Activated CD4-positive, alpha-beta memory T cell treated with anti-CD3 and anti-CD28 coated beads for 36 hours (primary cell): ENCODE measurements at regions of chr7 and their contacts with region 1.

Region 1: DNA sequence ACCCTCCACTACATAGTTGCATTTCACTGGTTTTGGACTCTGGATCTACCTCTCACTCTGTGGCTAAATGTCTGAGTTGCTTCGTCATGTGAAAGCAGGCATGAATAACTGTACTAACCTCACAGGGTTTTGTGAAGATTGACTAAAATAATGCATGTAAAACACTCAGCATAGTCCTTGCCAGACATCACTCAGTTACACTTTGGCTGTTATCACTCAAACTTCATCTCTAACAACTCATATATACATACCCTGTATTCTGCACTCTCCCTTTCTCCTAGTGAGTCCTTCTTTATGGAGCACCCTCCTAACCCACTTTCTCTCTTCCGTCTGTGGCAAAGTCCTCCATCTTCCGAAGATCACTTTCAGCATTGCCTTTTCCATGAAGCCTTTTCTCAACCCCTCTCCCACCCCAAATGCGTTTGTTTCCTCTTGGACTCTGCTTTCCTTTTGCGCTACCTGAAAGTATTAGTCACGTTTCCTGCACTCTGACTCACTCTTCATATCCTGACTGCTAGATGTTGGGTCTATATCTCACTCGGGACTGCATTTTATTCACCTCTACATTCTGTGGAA is 72.6 kb downstream of the OSBPL3 start:
- DNase-seq: peak; percentile 56
- H3K4me3 Mint-ChIP-seq: no peak overlapping the region
- H3K27ac Mint-ChIP-seq: no peak overlapping the region
- H3K4me1 Mint-ChIP-seq: peaks cover 42% of the 10 kb centered on the region
- H3K27me3 Mint-ChIP-seq: no peaks in the 10 kb centered on the region

Region 2: GRCh38 chr7:23531794-23532489 is 1375.5 kb before region 1 on chr7 and contains the start of gene TRA2A:
- CTCF ChIA-PET with region 1: no interaction called
- POLR2A ChIA-PET with region 1: no interaction called
- intact Hi-C with region 1: loop called (anchors 5 kb)
- DNase-seq: peak; percentile 98
- H3K4me3 Mint-ChIP-seq: peak within 1 kb of the TSS; percentile 100
- H3K27ac Mint-ChIP-seq: peak within 1 kb of the TSS; percentile 100
- H3K4me1 Mint-ChIP-seq: peaks cover 38% of the 10 kb centered on the region
- H3K27me3 Mint-ChIP-seq: no peaks in the 10 kb centered on the region
- total RNA-seq, gene TRA2A: 75.4 to 77.8 TPM

Region 3: GRCh38 chr7:24255139-24255538 is 652.3 kb before region 1 on chr7:
- CTCF ChIA-PET with region 1: no interaction called
- POLR2A ChIA-PET with region 1: no interaction called
- intact Hi-C with region 1: no loop called
- DNase-seq: peak; percentile 27
- H3K4me3 Mint-ChIP-seq: no peak overlapping the region
- H3K27ac Mint-ChIP-seq: no peak overlapping the region
- H3K4me1 Mint-ChIP-seq: peaks cover 10% of the 10 kb centered on the region
- H3K27me3 Mint-ChIP-seq: peaks cover 6% of the 10 kb centered on the region

Region 4: DNA sequence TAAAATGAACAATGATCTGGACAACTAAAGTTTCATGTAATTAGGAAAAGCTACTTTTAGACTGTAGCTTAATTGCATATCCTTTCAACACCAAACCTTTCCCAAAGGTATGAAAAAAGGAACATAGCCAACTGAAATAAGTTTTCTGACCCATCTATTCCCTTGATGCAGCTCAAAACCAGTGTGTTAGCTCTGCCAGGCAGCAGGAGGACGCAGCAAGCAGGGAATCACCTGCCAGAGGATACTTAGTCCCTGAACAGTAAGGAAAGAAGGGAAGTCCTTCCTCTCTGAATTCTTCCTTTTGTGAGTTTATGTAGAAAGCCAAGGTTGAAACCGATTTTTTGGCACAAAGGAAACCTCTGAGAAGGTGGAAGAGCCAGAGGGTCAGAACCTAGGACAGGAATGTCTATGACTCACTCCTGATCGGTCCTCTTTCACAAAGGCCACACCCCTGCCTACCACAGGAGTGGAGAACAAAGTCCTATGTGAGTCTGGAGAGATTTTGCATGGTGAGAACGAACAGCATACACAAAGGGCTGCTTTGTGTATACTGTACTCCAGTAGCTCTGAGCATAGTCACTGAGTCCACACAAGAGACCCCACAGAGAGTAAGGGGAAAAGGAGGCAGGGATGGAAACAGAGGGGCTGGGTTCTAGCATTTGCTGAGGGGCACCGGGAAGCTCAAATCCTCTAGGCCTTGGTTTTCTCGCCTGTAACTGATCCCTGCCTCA is 81.3 kb before region 1 on chr7:
- CTCF ChIA-PET with region 1: interaction called, 16 read pairs
- POLR2A ChIA-PET with region 1: interaction called, 9 read pairs
- intact Hi-C with region 1: loop called (anchors 1 kb)
- DNase-seq: no peak
- H3K4me3 Mint-ChIP-seq: peak overlapping the region; percentile 28
- H3K27ac Mint-ChIP-seq: peak overlapping the region; percentile 43
- H3K4me1 Mint-ChIP-seq: peaks cover 67% of the 10 kb centered on the region
- H3K27me3 Mint-ChIP-seq: no peaks in the 10 kb centered on the region

Region 5: DNA sequence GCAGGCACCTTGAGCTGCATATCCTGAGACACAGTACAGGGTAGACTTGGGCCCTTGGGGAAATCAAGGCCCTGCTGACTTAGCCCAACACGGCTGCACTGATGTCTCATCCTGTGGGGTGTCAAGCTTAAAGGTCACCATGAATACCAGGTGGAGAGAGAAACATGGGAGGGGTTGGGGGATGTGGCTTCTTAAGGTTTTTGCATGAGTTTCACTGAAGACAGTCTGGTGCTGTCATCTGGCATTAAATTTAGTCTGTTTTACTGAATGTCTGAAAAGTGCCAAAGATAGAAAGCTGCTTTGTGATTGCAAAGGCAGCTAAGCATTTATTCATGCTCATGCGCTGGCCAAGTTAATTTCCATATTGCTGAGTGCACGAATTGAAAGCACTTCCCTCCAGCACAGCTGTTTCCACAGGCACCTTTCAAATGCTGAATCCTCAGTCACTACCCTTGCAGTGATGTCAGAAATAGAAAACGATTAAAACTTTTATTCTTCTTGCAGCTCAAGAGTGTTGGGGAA is 29.5 kb before region 1 on chr7:
- CTCF ChIA-PET with region 1: no interaction called
- POLR2A ChIA-PET with region 1: interaction called, 5 read pairs
- intact Hi-C with region 1: loop called (anchors 1 kb)
- DNase-seq: peak; percentile 46
- H3K4me3 Mint-ChIP-seq: peak overlapping the region; percentile 38
- H3K27ac Mint-ChIP-seq: peak overlapping the region; percentile 61
- H3K4me1 Mint-ChIP-seq: peaks cover 55% of the 10 kb centered on the region
- H3K27me3 Mint-ChIP-seq: no peaks in the 10 kb centered on the region

Region 6: DNA sequence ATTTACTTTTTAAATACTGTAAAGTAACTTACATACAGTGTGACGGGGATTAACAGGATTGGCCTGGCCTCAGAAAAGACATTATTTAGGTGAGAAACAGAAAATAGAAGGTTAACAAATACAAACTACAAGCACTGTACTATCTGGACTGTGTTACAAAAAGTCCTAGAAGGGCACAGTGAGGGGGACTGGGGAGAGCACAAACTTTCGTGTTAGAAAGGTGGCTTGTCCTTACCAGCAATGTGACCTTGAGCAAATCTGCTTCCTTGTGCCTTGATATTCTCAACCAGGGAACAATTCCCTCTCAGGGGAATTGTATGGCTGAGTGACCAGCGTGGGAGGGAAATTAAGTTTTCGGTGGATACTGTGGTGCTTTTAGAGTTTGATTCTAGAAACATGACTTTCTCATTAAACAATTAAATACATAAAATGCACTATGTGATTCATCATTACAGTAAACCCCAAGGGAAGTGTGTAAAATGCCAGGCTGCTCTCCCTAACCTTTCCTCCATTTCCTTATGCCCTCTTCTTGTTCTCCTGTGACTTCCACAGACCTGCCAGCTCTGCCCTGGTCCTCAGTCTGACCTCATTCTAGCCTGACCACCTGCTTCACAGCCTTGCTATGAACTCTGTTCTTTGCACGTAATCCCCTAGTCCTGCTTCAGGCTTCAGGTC is 14.8 kb after region 1 on chr7:
- CTCF ChIA-PET with region 1: interaction called, 5 read pairs
- POLR2A ChIA-PET with region 1: interaction called, 4 read pairs
- intact Hi-C with region 1: loop called (anchors 1 kb)
- DNase-seq: no peak
- H3K4me3 Mint-ChIP-seq: no peak overlapping the region
- H3K27ac Mint-ChIP-seq: peak overlapping the region; percentile 85
- H3K4me1 Mint-ChIP-seq: peaks cover 86% of the 10 kb centered on the region
- H3K27me3 Mint-ChIP-seq: no peaks in the 10 kb centered on the region

Region 7: GRCh38 chr7:25028370-25029021 is 121.1 kb after region 1 on chr7:
- CTCF ChIA-PET with region 1: interaction called, 3 read pairs
- POLR2A ChIA-PET with region 1: interaction called, 3 read pairs
- intact Hi-C with region 1: loop called (anchors 2 kb)
- DNase-seq: peak; percentile 42
- H3K4me3 Mint-ChIP-seq: peak overlapping the region; percentile 0
- H3K27ac Mint-ChIP-seq: peak overlapping the region; percentile 70
- H3K4me1 Mint-ChIP-seq: peaks cover 48% of the 10 kb centered on the region
- H3K27me3 Mint-ChIP-seq: no peaks in the 10 kb centered on the region

Region 8: GRCh38 chr7:25125137-25125946 is 217.9 kb after region 1 on chr7 and contains the start of gene CYCS:
- CTCF ChIA-PET with region 1: no interaction called
- POLR2A ChIA-PET with region 1: no interaction called
- intact Hi-C with region 1: loop called (anchors 2 kb)
- DNase-seq: peak; percentile 100
- H3K4me3 Mint-ChIP-seq: peak within 1 kb of the TSS; percentile 100
- H3K27ac Mint-ChIP-seq: peak within 1 kb of the TSS; percentile 100
- H3K4me1 Mint-ChIP-seq: peaks cover 24% of the 10 kb centered on the region
- H3K27me3 Mint-ChIP-seq: no peaks in the 10 kb centered on the region
- total RNA-seq, gene CYCS: 199 to 207 TPM

Region 9: GRCh38 chr7:25369786-25370185 is 462.4 kb after region 1 on chr7:
- CTCF ChIA-PET with region 1: no interaction called
- POLR2A ChIA-PET with region 1: no interaction called
- intact Hi-C with region 1: no loop called
- DNase-seq: no peak
- H3K4me3 Mint-ChIP-seq: no peak overlapping the region
- H3K27ac Mint-ChIP-seq: no peak overlapping the region
- H3K4me1 Mint-ChIP-seq: no peaks in the 10 kb centered on the region
- H3K27me3 Mint-ChIP-seq: peaks cover 21% of the 10 kb centered on the region